ENCODE measurements at regions of chr2 and their contacts with region 1.

Region 1: GRCh38 chr2:28566521-28567041 is 70.7 kb downstream of the PLB1 start:
- DNase-seq: peak; percentile 91
- H3K4me3 Mint-ChIP-seq: peak overlapping the region; percentile 81
- H3K27ac Mint-ChIP-seq: peak overlapping the region; percentile 45
- H3K4me1 Mint-ChIP-seq: peaks cover 19% of the 10 kb centered on the region
- H3K27me3 Mint-ChIP-seq: peaks cover 11% of the 10 kb centered on the region

Region 2: DNA sequence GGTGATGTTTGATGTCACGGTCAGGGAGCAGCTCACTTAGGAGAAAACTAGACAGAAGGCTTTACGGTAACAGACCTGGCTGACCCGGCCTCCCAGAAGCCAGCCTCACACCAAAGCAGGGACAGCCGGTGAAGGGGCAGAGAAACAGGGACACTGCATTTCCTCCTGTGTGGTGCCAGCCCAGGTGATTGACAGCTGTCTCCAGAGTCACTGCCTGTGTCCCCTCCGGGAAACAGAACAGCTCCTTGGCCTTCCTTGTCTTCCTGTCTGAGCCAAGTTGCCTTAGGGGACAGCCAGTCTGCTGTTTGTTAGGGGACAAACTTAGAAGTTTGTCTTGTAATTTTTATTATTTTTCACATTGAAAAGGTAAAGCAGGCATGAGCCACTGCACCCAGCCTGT is 29.5 kb before region 1 on chr2:
- CTCF ChIA-PET with region 1: no interaction called
- POLR2A ChIA-PET with region 1: no interaction called
- DNase-seq: no peak
- H3K4me3 Mint-ChIP-seq: no peak overlapping the region
- H3K27ac Mint-ChIP-seq: no peak overlapping the region
- H3K4me1 Mint-ChIP-seq: peaks cover 19% of the 10 kb centered on the region
- H3K27me3 Mint-ChIP-seq: peaks cover 17% of the 10 kb centered on the region

Region 3: DNA sequence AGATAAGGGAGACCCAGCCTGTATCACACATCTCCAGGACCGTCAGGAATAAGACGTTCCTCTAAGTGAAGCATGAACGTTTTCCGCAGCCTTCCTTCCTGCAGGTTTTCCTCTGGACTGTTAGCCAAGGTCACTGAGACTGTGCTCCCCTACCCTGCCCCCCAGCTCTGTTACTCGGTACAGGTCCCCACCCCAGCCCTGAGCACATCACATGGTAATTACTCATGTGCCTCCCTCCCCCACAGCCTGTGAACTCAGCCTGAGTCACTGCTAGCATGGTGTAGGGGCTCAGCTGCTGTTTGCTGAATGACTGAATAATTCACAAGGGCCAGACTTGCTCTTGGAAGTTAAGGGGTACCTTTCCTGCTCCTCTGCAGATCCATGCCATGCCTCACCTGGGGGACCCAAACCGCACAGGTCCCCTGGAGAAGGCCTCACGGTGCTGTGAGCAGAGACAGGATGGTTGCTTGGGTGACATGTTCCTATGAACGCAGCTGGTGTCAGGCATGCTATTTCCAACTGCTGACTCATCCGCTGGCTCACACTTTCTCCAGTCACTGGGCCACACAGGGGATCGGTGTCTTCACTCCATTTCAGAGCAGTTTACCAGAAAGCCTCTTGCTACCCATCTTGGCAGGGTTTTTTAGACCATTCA is 17.4 kb after region 1 on chr2:
- CTCF ChIA-PET with region 1: interaction called, 17 read pairs
- POLR2A ChIA-PET with region 1: interaction called, 5 read pairs
- DNase-seq: peak; percentile 64
- H3K4me3 Mint-ChIP-seq: no peak overlapping the region
- H3K27ac Mint-ChIP-seq: peak overlapping the region; percentile 26
- H3K4me1 Mint-ChIP-seq: peaks cover 48% of the 10 kb centered on the region
- H3K27me3 Mint-ChIP-seq: no peaks in the 10 kb centered on the region

Region 4: GRCh38 chr2:28751252-28751955 is 184.8 kb after region 1 on chr2 and contains the start of gene PPP1CB:
- CTCF ChIA-PET with region 1: interaction called, 11 read pairs
- POLR2A ChIA-PET with region 1: interaction called, 7 read pairs
- DNase-seq: peak; percentile 96
- H3K4me3 Mint-ChIP-seq: peak within 1 kb of the TSS; percentile 91
- H3K27ac Mint-ChIP-seq: peak within 1 kb of the TSS; percentile 94
- H3K4me1 Mint-ChIP-seq: peaks cover 57% of the 10 kb centered on the region
- H3K27me3 Mint-ChIP-seq: no peaks in the 10 kb centered on the region
- total RNA-seq, gene PPP1CB: 211 to 213 TPM

Region 5: DNA sequence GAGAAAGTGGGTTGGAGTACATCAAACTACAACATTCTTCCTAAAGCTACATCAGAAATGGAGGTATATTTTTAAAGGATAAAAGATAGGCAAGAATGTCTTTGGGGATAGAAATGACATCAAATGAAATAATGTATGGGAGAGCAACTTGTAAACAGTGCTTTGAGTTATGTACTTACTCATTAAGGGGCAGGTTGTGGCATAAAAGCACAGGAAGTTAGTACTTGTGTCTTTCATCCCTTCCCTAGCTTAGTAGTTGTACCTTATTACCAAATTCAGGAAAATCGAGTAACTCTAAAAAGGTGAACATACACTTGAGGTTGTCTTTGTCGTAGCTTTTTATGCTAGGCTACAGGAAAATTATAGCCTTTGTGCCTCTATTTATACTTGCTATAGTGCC is 213.9 kb after region 1 on chr2:
- CTCF ChIA-PET with region 1: interaction called, 14 read pairs
- POLR2A ChIA-PET with region 1: no interaction called
- DNase-seq: no peak
- H3K4me3 Mint-ChIP-seq: no peak overlapping the region
- H3K27ac Mint-ChIP-seq: no peak overlapping the region
- H3K4me1 Mint-ChIP-seq: peaks cover 14% of the 10 kb centered on the region
- H3K27me3 Mint-ChIP-seq: no peaks in the 10 kb centered on the region

Region 6: DNA sequence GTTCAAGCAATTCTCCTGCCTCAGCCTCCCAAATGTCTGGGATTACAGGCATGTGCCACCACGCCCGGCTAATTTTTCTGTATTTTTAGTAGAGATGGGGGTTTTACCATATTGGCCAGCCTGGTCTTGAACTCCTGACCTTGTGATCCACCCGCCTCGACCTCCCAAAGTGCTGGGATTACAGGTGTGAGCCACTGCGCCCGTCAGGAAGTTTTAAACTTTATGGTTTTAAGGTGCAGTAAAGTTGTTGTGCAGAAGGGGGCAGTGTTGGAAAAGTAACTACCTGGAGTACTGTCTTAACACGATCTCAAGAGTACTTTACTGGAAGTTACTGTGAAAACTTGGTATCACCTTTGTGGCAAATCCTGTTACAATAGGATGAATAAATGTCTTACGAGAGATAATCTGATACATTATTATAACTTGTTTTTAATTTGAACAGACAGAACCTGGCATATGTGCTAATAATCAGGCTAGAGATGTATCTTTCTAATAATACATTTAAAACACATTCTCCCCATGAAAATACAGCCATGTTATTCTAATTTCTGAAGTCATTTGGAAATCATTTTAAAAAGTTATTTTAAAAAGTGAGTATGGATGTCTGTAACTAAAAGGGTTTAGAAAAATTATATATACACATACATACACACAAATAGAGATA is 254.8 kb after region 1 on chr2:
- CTCF ChIA-PET with region 1: interaction called, 14 read pairs
- POLR2A ChIA-PET with region 1: no interaction called
- DNase-seq: peak; percentile 53
- H3K4me3 Mint-ChIP-seq: no peak overlapping the region
- H3K27ac Mint-ChIP-seq: no peak overlapping the region
- H3K4me1 Mint-ChIP-seq: peaks cover 3% of the 10 kb centered on the region
- H3K27me3 Mint-ChIP-seq: peaks cover 2% of the 10 kb centered on the region

Measured in activated CD4-positive, alpha-beta memory T cell treated with anti-CD3 and anti-CD28 coated beads, Interleukin-2, amount 10 ng/mL, durations not matched to agents 7 days and 5 days (primary cell).